Heart right ventricle (tissue), 16 donors: ENCODE measurements at regions of chr5 and their contacts with region 1.

Region 1: DNA sequence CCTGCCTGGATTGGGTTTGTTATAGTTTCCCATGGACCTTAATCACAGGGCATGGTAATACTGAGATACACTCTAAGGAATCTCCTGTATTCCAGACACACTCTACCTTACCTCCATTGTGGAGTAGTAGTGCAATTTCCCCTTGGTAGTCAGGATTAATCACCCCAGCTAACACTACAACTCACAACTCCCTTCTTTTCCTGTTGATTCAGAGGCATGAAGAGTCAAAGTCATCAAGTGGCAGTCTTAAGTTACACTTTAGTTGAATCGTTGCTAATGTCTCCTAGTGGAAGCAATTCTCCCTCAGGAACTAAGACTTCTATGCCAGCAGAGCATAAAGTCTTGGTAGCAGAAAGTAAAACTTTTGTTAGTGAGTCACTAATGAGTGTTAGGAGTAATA is 122.7 kb upstream of the APC start:
- DNase-seq: no peak
- ATAC-seq: no peak
- H3K4me3 ChIP-seq: no peak overlapping the region
- H3K27ac ChIP-seq: no peak overlapping the region
- H3K4me1 ChIP-seq: no peaks in the 10 kb centered on the region
- H3K27me3 ChIP-seq: no peaks in the 10 kb centered on the region
- CTCF ChIP-seq: no peak

Region 2: DNA sequence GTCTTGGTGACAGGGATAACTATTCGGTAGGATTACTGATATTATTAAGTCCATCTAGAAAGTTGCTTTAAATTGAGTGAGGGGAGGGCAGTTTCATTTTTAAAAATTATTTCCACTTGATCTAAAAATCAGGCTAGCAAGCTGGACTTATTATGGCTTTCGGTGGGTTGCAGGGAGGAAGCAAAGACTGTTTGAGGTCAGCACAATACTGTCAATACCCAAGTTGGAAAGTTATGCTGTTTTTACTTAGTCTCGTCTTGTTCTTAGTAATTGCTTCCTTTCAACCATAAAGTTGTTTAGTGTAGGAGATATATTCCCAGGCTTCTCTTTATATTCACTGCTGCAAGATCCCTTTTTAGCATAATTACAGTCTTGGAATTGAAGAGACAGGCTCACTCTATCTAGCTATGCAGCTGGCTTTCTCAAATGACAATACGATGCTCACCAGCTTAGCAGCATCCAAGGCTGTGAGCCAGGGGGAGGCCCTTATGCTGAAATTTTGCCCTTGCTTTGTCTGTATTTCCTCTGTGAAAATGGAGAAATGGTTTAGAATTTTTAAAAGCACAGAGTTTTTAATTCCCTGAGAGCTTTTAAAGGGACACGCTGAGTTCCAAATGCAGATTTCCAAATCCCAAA is 54.5 kb after region 1 on chr5:
- intact Hi-C with region 1: no loop called
- DNase-seq: no peak
- ATAC-seq: no peak
- H3K4me3 ChIP-seq: no peak overlapping the region
- H3K27ac ChIP-seq: no peak overlapping the region
- H3K4me1 ChIP-seq: no peaks in the 10 kb centered on the region
- H3K27me3 ChIP-seq: no peaks in the 10 kb centered on the region
- CTCF ChIP-seq: no peak

Region 3: GRCh38 chr5:112848116-112848811 is 233.3 kb after region 1 on chr5:
- intact Hi-C with region 1: loop called in 1 of 10 experiments (anchors 5 kb)
- DNase-seq: peak in 1 of 2 donors; percentile 8
- ATAC-seq: peak; percentile 80 to 92 (median 88)
- H3K4me3 ChIP-seq: no peak overlapping the region
- H3K27ac ChIP-seq: peak overlapping the region in 1 of 10 donors; percentile 3
- H3K4me1 ChIP-seq: peaks cover 0 to 7% (median 0%) of the 10 kb centered on the region in 9 donors
- H3K27me3 ChIP-seq: peaks cover 0 to 4% (median 0%) of the 10 kb centered on the region in 7 donors
- CTCF ChIP-seq: peak; percentile 22 to 73 (median 64)